ENCODE measurements at regions of chr1 and their contacts with region 1.

Region 1: DNA sequence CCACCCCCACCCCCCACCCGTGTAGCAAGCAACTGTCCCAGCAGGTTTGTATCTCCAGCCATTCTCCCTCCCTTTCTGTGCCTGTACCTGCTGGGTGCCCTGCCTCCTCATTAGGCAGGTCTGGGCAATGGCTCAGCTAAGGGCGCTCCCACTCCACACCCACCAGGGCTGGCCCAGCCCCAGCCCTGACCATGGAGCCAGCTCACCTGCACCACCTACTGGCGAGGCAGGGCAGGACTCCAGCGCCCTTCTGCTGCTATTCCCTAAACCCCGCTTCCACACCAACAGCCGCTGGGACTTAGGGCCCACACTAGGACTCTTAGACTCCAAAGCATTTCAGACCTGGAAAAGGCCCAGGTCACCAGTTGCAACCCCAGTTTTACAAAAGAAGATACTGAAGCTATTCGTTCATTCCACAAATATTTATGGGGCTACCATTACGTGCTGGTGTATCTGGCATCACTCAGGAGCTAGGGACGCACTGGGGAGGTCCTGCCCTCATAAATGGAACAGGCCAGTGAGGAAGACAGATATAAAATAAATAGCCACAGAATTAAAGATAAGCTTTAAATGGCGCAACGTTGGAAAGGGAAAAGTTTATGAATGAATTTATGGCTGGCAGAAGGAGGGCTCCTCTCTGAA is 24.0 kb downstream of the PGLYRP3 start:
- DNase-seq: no peak
- ATAC-seq: peak; percentile 82
- H3K4me3 ChIP-seq: no peak overlapping the region
- H3K27ac ChIP-seq: no peak overlapping the region
- H3K4me1 ChIP-seq: peaks cover 9% of the 10 kb centered on the region
- H3K27me3 ChIP-seq: peaks cover 0 to 2% of the 10 kb centered on the region in 2 experiments; a peak in 1 of 4 replicates
- CTCF ChIP-seq: peak; percentile 61 to 86 (median 78)
- EP300 ChIP-seq: no peak
- POLR2A ChIP-seq: no peak
- RAD21 ChIP-seq: peak; percentile 29; the same call in 1 of the 2 replicates

Region 2: GRCh38 chr1:152667648-152668047 is 621.1 kb before region 1 on chr1:
- CTCF ChIA-PET with region 1: no interaction called
- POLR2A ChIA-PET with region 1: no interaction called
- RAD21 ChIA-PET with region 1: no interaction called
- SMC1A ChIA-PET with region 1: no interaction called
- in situ Hi-C with region 1: no loop called
- intact Hi-C with region 1: no loop called
- DNase-seq: no peak
- ATAC-seq: no peak
- H3K4me3 ChIP-seq: no peak overlapping the region
- H3K27ac ChIP-seq: no peak overlapping the region
- H3K4me1 ChIP-seq: no peaks in the 10 kb centered on the region
- H3K27me3 ChIP-seq: no peaks in the 10 kb centered on the region; a peak in 2 of 4 replicates
- CTCF ChIP-seq: no peak
- EP300 ChIP-seq: no peak
- POLR2A ChIP-seq: no peak
- RAD21 ChIP-seq: no peak

Region 3: DNA sequence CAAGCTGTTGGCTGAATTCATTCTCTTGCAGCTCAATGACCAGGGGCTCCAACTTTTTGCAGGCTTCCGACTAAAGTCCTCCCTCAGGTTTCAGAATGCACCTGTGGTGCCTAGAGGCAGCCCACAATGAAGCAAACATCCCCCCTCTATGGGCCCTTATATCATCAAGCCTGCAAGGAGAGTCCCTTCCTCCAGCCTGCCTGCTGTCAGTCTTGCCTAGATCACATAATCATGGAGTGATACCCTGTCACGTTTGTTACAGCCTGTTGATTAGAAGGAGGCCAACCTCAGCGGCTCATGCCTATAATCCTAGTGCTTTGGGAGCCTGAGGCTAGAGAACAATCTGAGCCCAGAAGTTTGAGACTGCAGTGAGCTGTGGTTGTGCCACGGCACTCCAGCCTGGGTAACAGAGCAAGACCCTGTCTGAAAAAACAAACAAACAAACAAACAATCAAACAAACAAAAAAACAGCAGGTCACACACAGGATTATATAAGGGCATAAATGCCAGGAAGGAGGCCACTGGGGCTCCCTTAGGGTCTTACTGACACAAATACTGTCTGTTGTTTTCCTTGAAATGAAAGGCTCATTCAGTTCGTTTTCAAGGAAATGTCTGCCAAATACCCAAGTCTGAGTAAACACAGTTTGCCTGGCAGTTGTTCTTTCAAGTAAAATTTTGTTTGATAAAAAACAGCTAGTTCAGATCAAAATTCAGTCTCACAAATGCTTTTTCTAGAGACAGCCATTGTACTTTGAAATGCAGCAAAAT is 291.9 kb before region 1 on chr1:
- CTCF ChIA-PET with region 1: no interaction called
- POLR2A ChIA-PET with region 1: no interaction called
- RAD21 ChIA-PET with region 1: no interaction called
- SMC1A ChIA-PET with region 1: no interaction called
- in situ Hi-C with region 1: no loop called
- intact Hi-C with region 1: no loop called
- DNase-seq: no peak
- ATAC-seq: no peak
- H3K4me3 ChIP-seq: no peak overlapping the region
- H3K27ac ChIP-seq: no peak overlapping the region
- H3K4me1 ChIP-seq: no peaks in the 10 kb centered on the region
- H3K27me3 ChIP-seq: no peaks in the 10 kb centered on the region; a peak in 1 of 4 replicates
- CTCF ChIP-seq: no peak
- EP300 ChIP-seq: no peak
- POLR2A ChIP-seq: no peak
- RAD21 ChIP-seq: no peak

Region 4: GRCh38 chr1:153192697-153193096 is 96.1 kb before region 1 on chr1:
- CTCF ChIA-PET with region 1: interaction called, 10 read pairs
- POLR2A ChIA-PET with region 1: no interaction called
- RAD21 ChIA-PET with region 1: no interaction called
- SMC1A ChIA-PET with region 1: interaction called, 5 read pairs
- in situ Hi-C with region 1: no loop called
- intact Hi-C with region 1: no loop called
- DNase-seq: no peak
- ATAC-seq: peak; percentile 77
- H3K4me3 ChIP-seq: no peak overlapping the region
- H3K27ac ChIP-seq: no peak overlapping the region
- H3K4me1 ChIP-seq: no peaks in the 10 kb centered on the region
- H3K27me3 ChIP-seq: no peaks in the 10 kb centered on the region; a peak in 1 of 4 replicates
- CTCF ChIP-seq: peak; percentile 44 to 57 (median 46); a peak in 5 of 6 replicates
- EP300 ChIP-seq: no peak
- POLR2A ChIP-seq: no peak
- RAD21 ChIP-seq: peak; percentile 83

Region 5: GRCh38 chr1:153238536-153238935 is 50.2 kb before region 1 on chr1:
- CTCF ChIA-PET with region 1: interaction called, 38 read pairs
- POLR2A ChIA-PET with region 1: no interaction called
- RAD21 ChIA-PET with region 1: interaction called, 8 read pairs
- SMC1A ChIA-PET with region 1: interaction called, 13 read pairs
- in situ Hi-C with region 1: no loop called
- intact Hi-C with region 1: no loop called
- DNase-seq: no peak
- ATAC-seq: peak; percentile 68
- H3K4me3 ChIP-seq: no peak overlapping the region
- H3K27ac ChIP-seq: no peak overlapping the region
- H3K4me1 ChIP-seq: no peaks in the 10 kb centered on the region
- H3K27me3 ChIP-seq: no peaks in the 10 kb centered on the region; a peak in 2 of 4 replicates
- CTCF ChIP-seq: peak; percentile 24 to 42 (median 31); a peak in 5 of 6 replicates
- EP300 ChIP-seq: no peak
- POLR2A ChIP-seq: no peak
- RAD21 ChIP-seq: peak; percentile 36

Region 6: GRCh38 chr1:153261281-153262069 is 27.3 kb before region 1 on chr1:
- CTCF ChIA-PET with region 1: interaction called, 11 read pairs
- POLR2A ChIA-PET with region 1: interaction called, 7 read pairs
- RAD21 ChIA-PET with region 1: interaction called, 5 read pairs
- SMC1A ChIA-PET with region 1: interaction called, 6 read pairs
- in situ Hi-C with region 1: no loop called
- intact Hi-C with region 1: no loop called
- DNase-seq: no peak
- ATAC-seq: peak; percentile 26
- H3K4me3 ChIP-seq: peak overlapping the region; percentile 50; the same call in 1 of the 2 replicates
- H3K27ac ChIP-seq: no peak overlapping the region
- H3K4me1 ChIP-seq: peaks cover 15% of the 10 kb centered on the region
- H3K27me3 ChIP-seq: 0 out of 4 replicates have a peak, but pooled peaks cover 0 to 4% of the 10 kb centered on the region in 2 experiments
- CTCF ChIP-seq: no peak
- EP300 ChIP-seq: no peak
- POLR2A ChIP-seq: no peak
- RAD21 ChIP-seq: no peak

Region 7: GRCh38 chr1:153306303-153307220 is 17.8 kb after region 1 on chr1:
- CTCF ChIA-PET with region 1: interaction called, 11 read pairs
- POLR2A ChIA-PET with region 1: no interaction called
- RAD21 ChIA-PET with region 1: no interaction called
- SMC1A ChIA-PET with region 1: interaction called, 4 read pairs
- in situ Hi-C with region 1: no loop called
- intact Hi-C with region 1: no loop called
- DNase-seq: no peak
- ATAC-seq: no peak
- H3K4me3 ChIP-seq: no peak overlapping the region
- H3K27ac ChIP-seq: no peak overlapping the region
- H3K4me1 ChIP-seq: no peaks in the 10 kb centered on the region
- H3K27me3 ChIP-seq: no peaks in the 10 kb centered on the region; a peak in 1 of 4 replicates
- CTCF ChIP-seq: no peak
- EP300 ChIP-seq: no peak
- POLR2A ChIP-seq: no peak
- RAD21 ChIP-seq: no peak

Region 8: DNA sequence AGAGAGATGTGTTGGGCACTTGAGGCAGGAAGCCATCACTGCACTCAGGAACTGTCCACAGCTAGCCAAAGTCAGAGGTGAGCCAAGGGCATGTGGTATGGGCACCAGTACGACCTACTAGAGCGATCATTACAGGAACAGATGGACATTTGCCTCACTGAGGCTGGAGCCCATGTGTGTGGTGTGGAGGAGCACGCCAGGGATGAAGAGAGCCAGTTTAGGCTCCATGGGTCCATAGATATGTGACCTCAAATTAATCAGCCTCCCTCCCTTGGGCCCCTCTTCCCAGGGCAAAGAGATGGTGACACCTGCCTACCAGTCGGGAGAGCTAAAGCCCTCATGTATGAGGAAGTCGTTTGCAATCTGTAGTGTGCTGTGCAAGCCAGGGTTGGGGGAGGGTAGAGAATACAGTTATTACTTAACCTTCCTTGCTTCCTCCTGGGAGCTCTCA is 55.8 kb after region 1 on chr1:
- CTCF ChIA-PET with region 1: interaction called, 20 read pairs
- POLR2A ChIA-PET with region 1: interaction called, 6 read pairs
- RAD21 ChIA-PET with region 1: interaction called, 26 read pairs
- SMC1A ChIA-PET with region 1: interaction called, 16 read pairs
- in situ Hi-C with region 1: no loop called
- intact Hi-C with region 1: no loop called
- DNase-seq: no peak
- ATAC-seq: peak; percentile 24
- H3K4me3 ChIP-seq: no peak overlapping the region; the same call in 1 of the 2 replicates
- H3K27ac ChIP-seq: peak overlapping the region; percentile 86
- H3K4me1 ChIP-seq: peaks cover 33% of the 10 kb centered on the region
- H3K27me3 ChIP-seq: no peaks in the 10 kb centered on the region
- CTCF ChIP-seq: no peak
- EP300 ChIP-seq: peak in 1 of 2 experiments; percentile 23; a peak in 1 of 4 replicates
- POLR2A ChIP-seq: no peak; the same call in 1 of the 2 replicates
- RAD21 ChIP-seq: no peak